ENCODE measurements at regions of chr22 and their contacts with region 1.

Region 1: DNA sequence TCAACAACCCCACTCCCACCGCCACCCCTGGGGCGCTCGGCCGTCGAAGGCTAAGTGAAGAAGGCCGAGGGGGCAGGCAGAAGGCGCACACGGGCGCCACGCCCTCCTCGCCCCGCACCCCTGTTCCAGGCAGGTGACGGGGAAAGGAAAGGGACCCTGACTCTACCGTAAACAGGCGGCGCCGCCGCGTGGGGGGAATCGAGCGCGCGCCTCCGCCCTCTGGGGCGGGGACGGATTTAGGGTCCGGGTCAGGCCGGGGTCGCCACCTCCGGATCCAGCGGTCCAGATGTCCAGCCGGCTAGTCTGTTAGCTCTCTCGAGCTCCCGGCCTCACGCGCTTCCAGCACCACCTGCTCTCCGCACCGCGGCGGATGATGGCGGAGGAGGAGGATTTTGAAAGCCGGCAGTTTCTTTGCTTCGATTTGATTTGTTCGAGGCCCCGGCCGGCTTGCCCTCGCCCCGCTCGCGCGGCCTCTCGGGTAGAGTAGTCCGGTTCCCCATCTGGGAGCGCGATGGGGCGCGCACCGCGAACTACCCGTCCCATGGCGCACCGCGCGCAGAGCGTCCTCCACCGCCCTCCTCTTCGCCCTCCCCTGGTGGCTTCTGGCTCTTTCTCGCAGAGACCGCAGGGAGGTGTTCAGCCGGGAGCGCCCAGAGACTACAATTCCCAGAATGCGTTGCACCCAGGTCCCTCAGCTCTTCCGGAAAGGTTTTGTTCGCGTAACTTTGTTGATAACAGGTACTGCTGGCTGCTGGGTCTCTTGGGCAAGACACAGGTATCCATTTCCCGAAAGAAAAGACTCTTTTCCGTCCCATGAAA is at the start of gene RANGAP1:
- DNase-seq: peak; percentile 99
- H3K4me3 Mint-ChIP-seq: peak within 1 kb of the TSS; percentile 98
- H3K27ac Mint-ChIP-seq: peak within 1 kb of the TSS; percentile 100
- H3K4me1 Mint-ChIP-seq: peaks cover 37% of the 10 kb centered on the region
- H3K27me3 Mint-ChIP-seq: no peaks in the 10 kb centered on the region
- total RNA-seq, gene RANGAP1: 173 to 174 TPM

Region 2: GRCh38 chr22:39946503-39947219 is 1339.4 kb before region 1 on chr22:
- CTCF ChIA-PET with region 1: no interaction called
- intact Hi-C with region 1: loop called (anchors 10 kb)
- DNase-seq: no peak
- H3K4me3 Mint-ChIP-seq: peak overlapping the region; percentile 53
- H3K27ac Mint-ChIP-seq: peak overlapping the region; percentile 95
- H3K4me1 Mint-ChIP-seq: peaks cover 99% of the 10 kb centered on the region
- H3K27me3 Mint-ChIP-seq: no peaks in the 10 kb centered on the region

Region 3: DNA sequence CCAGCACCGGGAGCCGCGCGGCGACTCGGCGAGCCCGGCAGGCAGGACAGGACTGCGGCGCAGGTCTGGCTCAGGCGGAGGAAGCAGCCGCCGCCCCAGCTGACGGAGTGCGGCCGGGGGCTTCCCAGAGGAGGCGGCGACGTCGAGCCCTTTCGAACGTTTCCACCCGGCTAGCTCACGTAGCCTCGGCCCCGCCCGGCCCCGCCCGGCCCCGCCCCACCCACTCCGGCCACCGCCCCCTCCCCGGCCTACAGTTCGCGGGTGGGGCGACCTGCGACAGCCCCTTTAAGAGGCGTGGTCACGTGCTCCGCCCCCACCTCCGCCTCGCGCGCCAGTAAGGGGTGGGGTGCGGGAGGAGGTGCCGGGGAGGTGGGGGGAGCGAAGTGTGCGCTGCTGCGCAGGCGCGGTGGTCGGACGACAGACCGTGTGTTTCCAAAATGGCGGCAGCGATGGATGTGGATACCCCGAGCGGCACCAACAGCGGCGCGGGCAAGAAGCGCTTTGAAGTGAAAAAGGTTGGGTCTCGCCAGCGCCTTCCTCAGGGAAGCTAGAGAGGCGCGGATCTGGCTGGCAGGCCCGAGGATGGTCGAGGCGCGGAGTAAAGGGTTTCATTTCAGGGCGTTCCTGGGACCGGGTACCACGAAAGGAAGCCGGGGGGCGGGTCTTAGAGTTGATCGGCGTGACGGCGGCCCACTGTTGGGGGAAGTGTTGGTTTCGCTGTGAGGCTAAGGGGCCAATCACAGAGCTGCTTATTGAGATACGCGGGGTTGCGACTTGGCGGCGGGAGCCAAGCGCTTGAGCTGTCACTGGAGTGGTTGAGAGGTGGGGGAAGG is 334.9 kb before region 1 on chr22 and contains the start of gene RBX1:
- CTCF ChIA-PET with region 1: no interaction called
- intact Hi-C with region 1: loop called (anchors 1 kb)
- DNase-seq: peak; percentile 99
- H3K4me3 Mint-ChIP-seq: peak within 1 kb of the TSS; percentile 93
- H3K27ac Mint-ChIP-seq: peak within 1 kb of the TSS; percentile 98
- H3K4me1 Mint-ChIP-seq: peaks cover 23% of the 10 kb centered on the region
- H3K27me3 Mint-ChIP-seq: no peaks in the 10 kb centered on the region
- total RNA-seq, gene RBX1: 90.1 to 93.3 TPM

Region 4: GRCh38 chr22:41078931-41079330 is 207.1 kb before region 1 on chr22:
- CTCF ChIA-PET with region 1: no interaction called
- intact Hi-C with region 1: no loop called
- DNase-seq: no peak
- H3K4me3 Mint-ChIP-seq: no peak overlapping the region
- H3K27ac Mint-ChIP-seq: no peak overlapping the region
- H3K4me1 Mint-ChIP-seq: no peaks in the 10 kb centered on the region
- H3K27me3 Mint-ChIP-seq: no peaks in the 10 kb centered on the region

Region 5: GRCh38 chr22:41123151-41123550 is 162.9 kb before region 1 on chr22:
- CTCF ChIA-PET with region 1: no interaction called
- intact Hi-C with region 1: no loop called
- DNase-seq: no peak
- H3K4me3 Mint-ChIP-seq: no peak overlapping the region
- H3K27ac Mint-ChIP-seq: no peak overlapping the region
- H3K4me1 Mint-ChIP-seq: peaks cover 29% of the 10 kb centered on the region
- H3K27me3 Mint-ChIP-seq: no peaks in the 10 kb centered on the region

Region 6: GRCh38 chr22:41204992-41205900 is 80.8 kb before region 1 on chr22 and contains the start of gene L3MBTL2:
- CTCF ChIA-PET with region 1: no interaction called
- intact Hi-C with region 1: loop called (anchors 1 kb)
- DNase-seq: peak; percentile 99
- H3K4me3 Mint-ChIP-seq: peak within 1 kb of the TSS; percentile 88
- H3K27ac Mint-ChIP-seq: peak within 1 kb of the TSS; percentile 86
- H3K4me1 Mint-ChIP-seq: peaks cover 33% of the 10 kb centered on the region
- H3K27me3 Mint-ChIP-seq: no peaks in the 10 kb centered on the region
- total RNA-seq, gene L3MBTL2: 19.4 to 22.3 TPM

Region 7: GRCh38 chr22:41381329-41382097 is 95.5 kb after region 1 on chr22 and contains the start of gene TEF:
- CTCF ChIA-PET with region 1: no interaction called
- intact Hi-C with region 1: loop called (anchors 1 kb)
- DNase-seq: peak; percentile 98
- H3K4me3 Mint-ChIP-seq: peak within 1 kb of the TSS; percentile 87
- H3K27ac Mint-ChIP-seq: peak within 1 kb of the TSS; percentile 95
- H3K4me1 Mint-ChIP-seq: peaks cover 13% of the 10 kb centered on the region
- H3K27me3 Mint-ChIP-seq: no peaks in the 10 kb centered on the region
- total RNA-seq, gene TEF: 1.7 to 1.9 TPM

Region 8: DNA sequence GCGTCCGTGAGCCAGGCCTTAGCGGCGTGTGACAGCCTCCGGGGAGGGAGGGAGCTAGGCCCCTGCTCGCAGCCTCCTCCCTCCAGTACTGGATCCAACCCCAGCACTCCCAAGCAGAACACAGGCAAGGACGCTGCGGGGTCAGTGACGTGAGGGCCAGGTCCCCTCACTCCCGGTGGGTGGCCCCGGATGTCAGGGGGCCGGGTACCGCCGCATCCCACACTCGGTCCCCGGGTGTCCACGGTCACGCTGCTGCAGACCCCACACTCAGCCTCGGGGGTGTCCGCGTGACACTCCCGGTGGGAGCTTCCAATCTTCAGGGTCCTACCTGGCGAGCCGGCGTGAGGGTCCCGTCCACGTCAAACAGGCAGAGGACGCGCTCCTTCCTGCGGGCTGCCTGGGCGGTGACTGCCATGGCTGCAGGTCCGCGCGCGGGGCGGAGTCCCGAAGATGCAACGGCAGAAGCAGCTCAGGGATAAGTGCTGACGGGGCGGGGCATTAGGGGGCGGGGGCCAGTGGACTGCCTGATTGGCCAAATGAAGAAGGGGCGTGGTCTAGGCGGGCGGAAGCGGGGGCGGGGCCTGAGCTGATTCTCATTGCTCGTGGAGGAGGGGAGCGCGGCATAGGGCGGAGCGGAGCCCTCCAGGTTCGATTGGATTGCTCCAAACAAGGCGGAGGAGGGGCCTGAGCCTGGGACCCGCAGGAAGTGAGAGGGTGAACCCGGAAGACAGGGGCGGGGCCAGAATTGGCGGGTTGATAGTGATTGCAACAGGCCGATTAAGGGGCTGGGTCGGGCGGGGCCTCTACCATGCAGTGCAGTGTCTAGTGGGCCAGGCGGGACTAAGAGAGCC is 303.6 kb after region 1 on chr22 and contains the start of gene PMM1:
- CTCF ChIA-PET with region 1: no interaction called
- intact Hi-C with region 1: loop called (anchors 1 kb)
- DNase-seq: peak; percentile 100
- H3K4me3 Mint-ChIP-seq: peak within 1 kb of the TSS; percentile 93
- H3K27ac Mint-ChIP-seq: peak within 1 kb of the TSS; percentile 84
- H3K4me1 Mint-ChIP-seq: peaks cover 12% of the 10 kb centered on the region
- H3K27me3 Mint-ChIP-seq: no peaks in the 10 kb centered on the region
- total RNA-seq, gene PMM1: 35.3 to 35.6 TPM

Region 9: GRCh38 chr22:41780746-41781505 is 494.9 kb after region 1 on chr22:
- CTCF ChIA-PET with region 1: no interaction called
- intact Hi-C with region 1: no loop called
- DNase-seq: peak; percentile 98
- H3K4me3 Mint-ChIP-seq: peak overlapping the region; percentile 86
- H3K27ac Mint-ChIP-seq: peak overlapping the region; percentile 95
- H3K4me1 Mint-ChIP-seq: peaks cover 49% of the 10 kb centered on the region
- H3K27me3 Mint-ChIP-seq: no peaks in the 10 kb centered on the region

Measured in activated naive CD4-positive, alpha-beta T cell treated with anti-CD3 and anti-CD28 coated beads for 36 hours (primary cell).